MCF 10A (cell line): ENCODE measurements at regions of chr2 and their contacts with region 1.

Region 1: DNA sequence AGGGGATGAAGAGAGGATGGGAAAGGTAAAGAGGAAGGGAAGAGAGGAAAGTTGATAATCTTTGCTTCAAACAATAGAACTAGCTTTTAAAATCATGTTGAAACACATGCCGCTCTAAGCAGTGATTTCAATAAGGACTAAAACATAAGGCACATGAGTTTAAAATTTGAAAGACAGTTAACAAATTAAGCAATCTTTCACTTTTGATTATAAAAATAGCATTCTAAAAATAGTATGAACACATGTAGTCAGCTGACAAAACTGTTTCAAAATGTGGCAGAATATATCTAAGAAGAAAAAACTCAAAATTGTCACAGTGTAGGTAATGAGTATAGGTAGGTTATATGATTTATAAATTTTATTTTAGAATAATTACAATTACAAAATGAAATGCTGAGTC is 25.3 kb downstream of the PSME4 start:
- DNase-seq: no peak
- H3K4me3 Mint-ChIP-seq: no peak overlapping the region
- H3K27ac Mint-ChIP-seq: peak overlapping the region; percentile 41
- H3K4me1 Mint-ChIP-seq: peaks cover 11% of the 10 kb centered on the region
- H3K27me3 Mint-ChIP-seq: no peaks in the 10 kb centered on the region
- CTCF ChIP-seq: no peak

Region 2: DNA sequence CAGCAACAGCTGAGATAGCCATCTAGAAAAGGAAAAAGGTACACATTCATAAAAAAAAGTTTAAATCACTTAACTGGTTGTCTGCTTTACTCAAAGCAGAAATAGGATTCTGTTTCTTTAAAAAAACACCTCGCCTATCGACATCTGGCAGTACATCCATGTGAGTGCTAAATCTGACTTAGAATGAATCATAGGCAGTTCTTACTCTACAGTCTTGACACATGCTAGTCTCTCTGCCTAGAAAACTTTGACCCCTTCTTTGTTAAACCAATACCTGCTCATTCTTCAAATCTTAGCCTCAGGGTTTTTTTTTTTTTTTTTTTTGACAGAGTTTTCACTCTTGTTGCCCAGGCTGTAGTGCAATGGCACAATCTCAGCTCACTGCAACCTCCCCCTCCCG is 48.7 kb before region 1 on chr2:
- CTCF ChIA-PET with region 1: no interaction called
- POLR2A ChIA-PET with region 1: no interaction called
- intact Hi-C with region 1: no loop called
- DNase-seq: peak; percentile 85
- H3K4me3 Mint-ChIP-seq: no peak overlapping the region
- H3K27ac Mint-ChIP-seq: peak overlapping the region; percentile 63
- H3K4me1 Mint-ChIP-seq: peaks cover 10% of the 10 kb centered on the region
- H3K27me3 Mint-ChIP-seq: no peaks in the 10 kb centered on the region
- CTCF ChIP-seq: no peak

Region 3: DNA sequence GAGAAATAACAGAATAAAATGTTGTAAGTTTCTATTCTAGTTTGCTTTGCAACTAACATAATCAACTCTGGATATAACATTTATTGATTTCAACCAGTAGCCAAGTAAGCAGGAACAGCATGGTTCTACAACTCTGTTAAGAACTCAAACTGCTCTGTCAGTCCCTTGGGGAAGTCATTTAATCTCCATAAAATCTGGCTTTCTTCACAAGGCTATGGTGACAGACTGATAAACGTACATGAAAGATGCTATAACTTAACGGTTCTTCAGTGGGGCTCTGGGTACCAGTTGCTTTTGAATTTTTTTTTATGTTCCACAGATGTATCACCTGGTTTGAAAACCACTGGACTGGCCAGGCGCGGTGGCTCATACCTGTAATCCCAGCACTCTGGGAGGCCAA is 14.9 kb after region 1 on chr2:
- CTCF ChIA-PET with region 1: interaction called, 3 read pairs
- POLR2A ChIA-PET with region 1: interaction called, 10 read pairs
- intact Hi-C with region 1: no loop called
- DNase-seq: no peak
- H3K4me3 Mint-ChIP-seq: no peak overlapping the region
- H3K27ac Mint-ChIP-seq: peak overlapping the region; percentile 85
- H3K4me1 Mint-ChIP-seq: peaks cover 30% of the 10 kb centered on the region
- H3K27me3 Mint-ChIP-seq: no peaks in the 10 kb centered on the region
- CTCF ChIP-seq: no peak

Region 4: GRCh38 chr2:54090521-54091117 is 145.1 kb after region 1 on chr2:
- CTCF ChIA-PET with region 1: no interaction called
- POLR2A ChIA-PET with region 1: no interaction called
- intact Hi-C with region 1: no loop called
- DNase-seq: no peak
- H3K4me3 Mint-ChIP-seq: no peak overlapping the region
- H3K27ac Mint-ChIP-seq: no peak overlapping the region
- H3K4me1 Mint-ChIP-seq: no peaks in the 10 kb centered on the region
- H3K27me3 Mint-ChIP-seq: no peaks in the 10 kb centered on the region
- CTCF ChIP-seq: no peak